Activated CD4-positive, alpha-beta memory T cell treated with anti-CD3 and anti-CD28 coated beads for 36 hours (primary cell): ENCODE measurements at regions of chr3 and their contacts with region 1.

Region 1: DNA sequence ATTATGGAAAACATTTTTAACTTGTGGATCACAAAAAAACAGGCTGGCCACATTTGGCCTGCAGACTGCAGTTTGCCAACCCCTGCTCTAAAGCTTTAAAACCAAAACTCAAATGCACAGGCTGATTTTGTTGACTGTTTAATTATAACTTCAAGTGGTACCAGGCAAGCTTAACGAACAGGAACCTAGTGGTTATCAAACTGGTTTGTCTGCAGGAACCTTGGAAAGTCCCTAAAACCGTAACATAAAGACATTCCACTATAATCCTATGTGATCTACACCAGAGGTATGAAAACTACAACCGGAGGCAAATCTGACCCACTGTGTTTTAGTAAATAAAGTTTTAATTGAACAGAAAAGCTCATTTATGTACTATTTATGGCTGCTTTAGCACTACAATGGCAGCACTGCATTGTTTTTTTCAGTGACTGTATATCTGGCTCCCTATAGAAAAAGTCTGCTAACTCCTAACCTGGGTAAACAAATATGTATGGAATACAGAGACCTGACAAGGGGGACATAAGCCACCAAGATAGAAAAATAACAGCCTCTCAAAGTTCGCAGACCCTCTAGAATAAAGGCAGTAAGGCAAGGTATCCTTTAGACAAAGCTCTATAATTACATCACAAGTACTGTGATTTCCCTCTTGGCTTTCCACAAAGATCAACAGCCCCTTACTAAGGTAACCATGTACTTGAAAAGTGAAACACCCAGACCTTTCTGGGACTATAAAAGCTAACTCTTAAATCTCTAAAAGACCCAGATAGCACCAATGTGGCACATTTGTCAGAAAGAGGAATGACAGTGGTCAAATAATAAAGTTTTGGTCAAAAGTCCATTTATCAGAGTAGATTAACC is 52.1 kb downstream of the TBL1XR1 start:
- DNase-seq: no peak
- H3K4me3 Mint-ChIP-seq: peak overlapping the region; percentile 34
- H3K27ac Mint-ChIP-seq: peak overlapping the region; percentile 66
- H3K4me1 Mint-ChIP-seq: peaks cover 67% of the 10 kb centered on the region
- H3K27me3 Mint-ChIP-seq: no peaks in the 10 kb centered on the region

Region 2: GRCh38 chr3:177109688-177110330 is 35.3 kb before region 1 on chr3:
- CTCF ChIA-PET with region 1: no interaction called
- POLR2A ChIA-PET with region 1: no interaction called
- intact Hi-C with region 1: loop called (anchors 5 kb)
- DNase-seq: no peak
- H3K4me3 Mint-ChIP-seq: no peak overlapping the region
- H3K27ac Mint-ChIP-seq: no peak overlapping the region
- H3K4me1 Mint-ChIP-seq: peaks cover 68% of the 10 kb centered on the region
- H3K27me3 Mint-ChIP-seq: no peaks in the 10 kb centered on the region

Region 3: DNA sequence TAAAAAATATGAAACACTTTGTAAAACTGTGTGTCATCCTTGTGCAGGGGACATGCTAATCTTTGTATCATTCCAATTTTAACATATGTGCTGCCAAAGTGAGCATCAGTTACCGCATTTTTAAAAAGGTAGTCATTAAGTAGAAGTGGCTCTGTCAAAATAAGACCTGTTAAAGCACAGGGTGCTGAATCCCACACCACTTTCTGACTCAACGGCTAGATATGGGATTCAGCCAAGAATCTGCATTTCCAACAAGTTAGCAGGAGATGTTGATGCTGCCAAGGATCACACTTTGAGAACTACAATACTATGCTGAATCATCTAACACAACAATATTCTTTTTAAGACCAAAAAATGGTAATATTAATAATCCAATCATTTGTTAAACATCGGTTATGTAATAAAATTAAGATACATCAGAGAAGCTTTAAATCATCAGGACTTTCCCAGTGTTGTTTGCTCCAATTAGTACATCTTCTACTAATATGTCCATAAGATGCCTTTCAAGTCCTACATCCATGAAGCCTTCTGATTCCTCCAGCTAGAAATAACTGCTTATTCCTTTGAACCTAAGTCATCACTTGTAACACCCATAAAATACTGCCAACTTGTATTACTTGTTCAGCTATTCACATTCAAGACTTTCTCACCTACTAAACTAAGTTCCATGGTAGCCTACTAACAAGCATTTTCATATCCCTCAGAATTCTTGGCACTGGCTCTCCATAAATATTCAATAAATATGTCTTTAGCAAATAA is 19.0 kb before region 1 on chr3:
- CTCF ChIA-PET with region 1: no interaction called
- POLR2A ChIA-PET with region 1: interaction called, 4 read pairs
- intact Hi-C with region 1: loop called (anchors 2 kb)
- DNase-seq: no peak
- H3K4me3 Mint-ChIP-seq: no peak overlapping the region
- H3K27ac Mint-ChIP-seq: no peak overlapping the region
- H3K4me1 Mint-ChIP-seq: peaks cover 70% of the 10 kb centered on the region
- H3K27me3 Mint-ChIP-seq: no peaks in the 10 kb centered on the region

Region 4: GRCh38 chr3:177185035-177185574 is 40.0 kb after region 1 on chr3:
- CTCF ChIA-PET with region 1: interaction called, 3 read pairs
- POLR2A ChIA-PET with region 1: no interaction called
- intact Hi-C with region 1: loop called (anchors 1 kb)
- DNase-seq: no peak
- H3K4me3 Mint-ChIP-seq: no peak overlapping the region
- H3K27ac Mint-ChIP-seq: peak overlapping the region; percentile 35
- H3K4me1 Mint-ChIP-seq: peaks cover 62% of the 10 kb centered on the region
- H3K27me3 Mint-ChIP-seq: no peaks in the 10 kb centered on the region